AG04449 (cell line): ENCODE measurements at regions of chr13 and their contacts with region 1.

Region 1: DNA sequence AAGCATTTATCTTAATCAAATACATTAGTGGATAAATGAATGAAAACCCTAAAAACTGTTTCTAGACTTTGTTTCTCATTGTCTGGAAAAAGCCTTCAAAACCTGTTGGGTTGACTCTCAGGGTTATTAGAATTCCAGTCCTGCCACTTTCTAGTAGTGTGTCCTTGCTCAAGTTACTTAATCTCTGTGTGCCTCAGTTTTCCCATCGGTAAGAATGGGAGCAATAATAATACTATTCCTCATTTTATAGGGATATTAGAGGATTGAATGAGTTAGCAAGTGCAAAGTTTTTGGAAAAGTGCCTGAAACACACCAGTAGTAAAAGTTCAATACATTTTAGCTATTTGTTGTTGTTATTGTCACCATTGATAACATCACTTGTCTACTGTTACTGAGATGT is 2.9 kb downstream of the URAD start:
- DNase-seq: no peak
- H3K4me3 ChIP-seq: no peak overlapping the region
- CTCF ChIP-seq: no peak

Region 2: GRCh38 chr13:27839809-27840467 is 145.7 kb before region 1 on chr13:
- CTCF ChIA-PET with region 1: interaction called, 12 read pairs
- POLR2A ChIA-PET with region 1: no interaction called
- DNase-seq: no peak
- H3K4me3 ChIP-seq: no peak overlapping the region
- CTCF ChIP-seq: no peak

Region 3: DNA sequence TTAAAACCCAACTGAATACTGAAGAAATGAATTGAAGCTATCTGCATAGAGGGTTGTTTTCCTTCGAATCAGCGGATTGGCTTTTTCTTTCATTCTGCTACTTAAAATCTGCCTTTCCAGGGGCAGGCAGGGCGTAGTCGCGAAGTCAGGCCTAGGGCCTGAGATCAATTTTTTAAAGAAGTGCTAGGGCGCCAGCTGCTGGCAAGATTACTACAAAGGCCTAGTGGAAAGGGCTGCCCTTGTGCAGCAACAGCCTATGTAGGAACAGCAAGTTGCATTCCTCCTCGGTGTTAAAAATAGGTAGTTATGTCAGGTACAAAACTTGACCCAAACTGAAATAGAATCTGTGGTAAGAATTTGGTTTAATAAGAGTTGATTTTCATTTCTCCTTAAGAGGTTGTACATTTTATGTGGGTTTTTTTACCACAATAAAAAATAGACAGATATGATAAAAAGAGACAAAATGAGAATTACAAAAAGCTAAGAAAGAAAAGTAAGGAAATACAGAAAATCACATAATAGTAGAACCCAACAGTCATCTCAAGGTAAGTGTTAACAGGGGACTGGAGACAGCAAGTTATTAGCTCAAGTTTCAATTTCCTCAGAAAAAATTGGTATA is 12.4 kb after region 1 on chr13:
- CTCF ChIA-PET with region 1: interaction called, 26 read pairs
- POLR2A ChIA-PET with region 1: no interaction called
- DNase-seq: no peak
- H3K4me3 ChIP-seq: no peak overlapping the region
- CTCF ChIP-seq: peak; percentile 43